ENCODE measurements at regions of chr3 and their contacts with region 1.

Region 1: DNA sequence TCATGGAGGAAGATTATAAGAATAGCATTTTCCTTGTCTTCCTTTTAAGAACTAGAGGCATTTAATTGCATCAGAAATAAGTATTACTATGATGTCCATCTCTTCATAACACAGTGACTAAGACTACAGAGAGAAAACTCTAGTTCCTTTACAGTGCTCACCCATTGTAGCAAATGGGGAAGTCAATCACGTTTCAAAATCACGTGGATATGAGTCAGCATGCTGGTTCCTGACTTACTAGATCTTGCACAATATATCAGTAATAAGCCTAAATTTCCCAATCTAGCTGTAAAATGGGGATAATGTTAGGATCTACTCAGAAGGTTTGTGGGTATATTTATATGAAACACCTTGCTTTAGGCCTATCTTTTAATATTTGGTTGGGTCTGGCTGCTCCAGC is 254.8 kb upstream of the EOMES start:
- H3K4me3 Mint-ChIP-seq: no peak overlapping the region
- H3K27ac Mint-ChIP-seq: no peak overlapping the region
- H3K4me1 Mint-ChIP-seq: peaks cover 5% of the 10 kb centered on the region
- H3K27me3 Mint-ChIP-seq: no peaks in the 10 kb centered on the region

Region 2: DNA sequence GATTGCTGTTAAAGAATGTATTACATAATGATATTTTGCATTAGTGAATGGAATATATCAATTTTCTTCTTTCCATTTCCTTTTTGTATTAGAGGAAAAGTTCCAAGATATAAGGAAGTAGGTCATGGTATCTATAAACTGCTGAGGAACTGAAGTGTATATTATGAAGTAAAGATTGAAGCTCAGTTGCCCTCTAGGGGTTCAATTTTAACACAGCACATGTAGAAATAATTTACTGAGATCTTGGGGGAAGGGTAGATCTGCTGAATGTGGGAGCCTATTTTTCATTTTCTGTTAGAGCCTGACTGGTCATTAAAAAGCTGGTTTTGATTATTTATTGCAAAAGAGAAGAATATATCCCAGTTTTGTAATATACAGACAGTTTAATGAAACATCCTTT is 309.7 kb after region 1 on chr3:
- intact Hi-C with region 1: loop called (anchors 10 kb)
- H3K4me3 Mint-ChIP-seq: no peak overlapping the region
- H3K27ac Mint-ChIP-seq: no peak overlapping the region
- H3K4me1 Mint-ChIP-seq: peaks cover 8% of the 10 kb centered on the region
- H3K27me3 Mint-ChIP-seq: no peaks in the 10 kb centered on the region

Measured in dendritic cell treated with granulocyte-macrophage colony-stimulating factor and Interleukin-4, amounts not matched to agents 40 ng/mL and 50 ng/mL, for 4 days (primary cell).